CD4-positive, alpha-beta T cell (primary cell): ENCODE measurements at regions of chr2 and their contacts with region 1.

Region 1: GRCh38 chr2:177148477-177149154 is 64.0 kb upstream of the HNRNPA3 start:
- DNase-seq: peak; percentile 50 to 84 (median 62)
- ATAC-seq: peak; percentile 89
- H3K4me3 ChIP-seq: peak overlapping the region; percentile 56
- H3K4me3 Mint-ChIP-seq: peak overlapping the region; percentile 83
- H3K27ac ChIP-seq: no peak overlapping the region
- H3K27ac Mint-ChIP-seq: peak overlapping the region; percentile 8
- H3K4me1 ChIP-seq: peaks cover 8% of the 10 kb centered on the region
- H3K4me1 Mint-ChIP-seq: peaks cover 13% of the 10 kb centered on the region
- H3K27me3 ChIP-seq: peaks cover 4 to 25% of the 10 kb centered on the region in 2 experiments
- H3K27me3 Mint-ChIP-seq: peaks cover 49% of the 10 kb centered on the region
- CTCF ChIP-seq: peak; percentile 99

Region 2: DNA sequence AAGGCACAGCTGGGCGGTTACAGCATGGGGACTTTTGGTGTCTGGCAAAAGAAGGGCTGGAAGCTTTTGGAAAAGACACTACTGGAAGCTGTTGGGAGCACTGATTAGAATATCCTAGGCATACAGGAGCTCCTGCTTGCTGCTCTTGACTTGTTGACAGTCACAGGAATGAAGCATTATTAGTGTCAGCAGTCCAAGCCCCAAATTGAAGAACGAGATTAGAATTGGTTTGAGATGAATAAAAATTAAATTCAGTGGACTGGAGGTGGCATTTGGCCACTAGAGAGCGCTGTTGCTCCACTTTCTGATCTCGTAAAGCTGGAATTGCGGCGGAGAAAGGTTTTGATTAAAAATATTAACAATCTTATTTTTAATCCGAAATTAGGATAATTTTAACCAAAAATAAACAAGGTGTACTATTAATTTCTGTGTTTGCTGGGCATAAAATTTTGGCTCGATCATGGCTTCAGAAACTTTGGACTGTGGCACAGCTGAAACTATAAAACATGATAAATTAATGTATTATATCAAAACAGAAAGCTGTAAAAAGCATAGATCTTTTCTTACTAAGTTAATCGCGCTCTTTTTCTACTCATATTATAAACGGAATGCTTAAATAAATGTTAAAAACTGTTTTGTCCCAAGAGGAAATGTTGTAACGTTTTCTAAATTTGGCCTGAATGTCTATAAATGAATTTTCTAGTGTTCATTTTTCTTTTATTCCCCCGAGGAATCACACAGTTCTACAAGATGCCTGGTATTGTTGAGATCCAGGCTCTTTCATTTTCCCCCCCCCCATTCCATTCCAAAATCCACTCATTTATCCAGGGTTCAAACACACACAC is 1021.5 kb before region 1 on chr2:
- CTCF ChIA-PET with region 1: interaction called, 32 read pairs
- POLR2A ChIA-PET with region 1: interaction called, 3 read pairs
- intact Hi-C with region 1: loop called (anchors 1 to 2 kb)
- DNase-seq: peak; percentile 54 to 85 (median 65)
- ATAC-seq: no peak
- H3K4me3 ChIP-seq: no peak overlapping the region
- H3K4me3 Mint-ChIP-seq: no peak overlapping the region
- H3K27ac ChIP-seq: no peak overlapping the region
- H3K27ac Mint-ChIP-seq: peak overlapping the region; percentile 38
- H3K4me1 ChIP-seq: peaks cover 43% of the 10 kb centered on the region
- H3K4me1 Mint-ChIP-seq: peaks cover 45% of the 10 kb centered on the region
- H3K27me3 ChIP-seq: peaks cover 79 to 90% of the 10 kb centered on the region in 2 experiments
- H3K27me3 Mint-ChIP-seq: peaks cover 84% of the 10 kb centered on the region
- CTCF ChIP-seq: peak; percentile 99

Region 3: DNA sequence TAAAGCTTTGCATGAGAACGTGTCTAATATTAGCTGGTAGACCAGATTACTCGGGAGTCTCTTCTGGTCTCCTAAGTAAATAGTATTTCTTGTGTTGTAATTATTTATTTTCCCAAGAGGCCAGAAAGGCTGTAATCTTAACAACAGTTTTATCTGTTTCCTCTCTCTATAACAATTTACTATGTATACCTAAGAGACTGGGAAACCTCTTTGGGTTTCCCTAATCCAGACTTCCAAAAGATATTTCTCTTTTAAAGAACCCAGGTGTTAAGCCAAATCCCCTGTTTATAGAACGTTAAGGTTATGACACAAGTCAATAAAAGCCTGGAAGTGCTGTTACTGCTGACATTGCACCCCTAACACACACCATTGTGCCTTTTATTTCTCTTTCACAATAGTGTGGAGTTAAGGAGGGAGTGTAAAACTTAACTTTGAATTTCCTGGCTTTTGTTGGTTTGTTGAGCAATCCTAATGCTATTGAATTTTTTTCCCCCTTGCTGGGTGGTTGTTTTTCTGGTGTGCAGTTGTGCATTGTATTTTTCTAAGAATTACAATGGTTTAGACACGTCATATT is 686.7 kb before region 1 on chr2:
- CTCF ChIA-PET with region 1: no interaction called
- POLR2A ChIA-PET with region 1: no interaction called
- intact Hi-C with region 1: loop called (anchors 10 kb)
- DNase-seq: no peak
- ATAC-seq: no peak
- H3K4me3 ChIP-seq: no peak overlapping the region
- H3K4me3 Mint-ChIP-seq: no peak overlapping the region
- H3K27ac ChIP-seq: no peak overlapping the region
- H3K27ac Mint-ChIP-seq: no peak overlapping the region
- H3K4me1 ChIP-seq: no peaks in the 10 kb centered on the region
- H3K4me1 Mint-ChIP-seq: no peaks in the 10 kb centered on the region
- H3K27me3 ChIP-seq: peaks cover 10 to 53% of the 10 kb centered on the region in 2 experiments
- H3K27me3 Mint-ChIP-seq: peaks cover 73% of the 10 kb centered on the region
- CTCF ChIP-seq: no peak

Region 4: DNA sequence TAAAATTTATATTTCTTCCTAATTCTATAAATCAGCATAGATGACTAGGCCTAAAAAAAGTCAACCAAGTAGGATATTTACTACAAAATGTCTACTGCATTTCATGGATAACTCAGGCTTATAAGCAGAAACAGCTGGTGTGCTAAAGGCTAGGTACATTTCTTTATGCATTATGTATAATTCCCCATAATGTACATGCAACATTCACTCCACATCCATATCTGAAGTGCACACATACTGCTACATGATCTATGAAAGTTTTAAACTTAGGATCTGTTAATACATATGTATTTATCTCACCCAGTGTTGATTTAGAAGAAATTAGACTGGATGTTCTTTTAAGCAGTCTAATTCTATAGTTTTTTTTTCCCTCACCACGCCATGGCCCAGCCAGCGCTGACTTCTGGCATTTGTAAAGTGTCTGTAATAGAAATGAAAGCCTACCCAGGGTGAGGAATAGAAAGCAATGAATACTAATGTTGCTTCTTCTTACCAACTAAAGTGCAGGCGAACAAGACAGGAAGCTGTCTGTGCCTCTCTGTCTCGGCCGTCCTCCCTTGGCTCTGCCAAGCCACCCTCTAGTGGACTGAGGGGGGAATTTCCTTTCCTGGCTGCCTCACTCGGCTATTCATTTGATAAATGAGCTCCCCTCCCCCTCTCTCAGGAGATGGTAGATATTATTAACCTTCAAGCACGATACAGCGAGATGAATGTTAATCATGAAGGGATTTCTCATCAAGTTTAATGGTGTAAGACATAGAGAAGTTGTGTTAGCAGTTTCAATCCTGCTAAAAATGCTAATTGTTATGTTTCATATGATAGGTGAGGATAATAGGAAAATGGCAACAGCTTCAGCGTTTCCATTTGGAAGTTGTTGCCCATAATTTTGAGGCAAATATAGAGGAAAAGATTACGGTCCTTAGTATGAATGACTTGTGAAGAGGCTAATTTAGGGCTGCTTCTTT is 494.9 kb before region 1 on chr2:
- CTCF ChIA-PET with region 1: no interaction called
- POLR2A ChIA-PET with region 1: no interaction called
- intact Hi-C with region 1: loop called (anchors 10 kb)
- DNase-seq: peak in 6 of 14 experiments; percentile 7 to 52 (median 18)
- ATAC-seq: peak; percentile 51
- H3K4me3 ChIP-seq: no peak overlapping the region
- H3K4me3 Mint-ChIP-seq: no peak overlapping the region
- H3K27ac ChIP-seq: no peak overlapping the region
- H3K27ac Mint-ChIP-seq: no peak overlapping the region
- H3K4me1 ChIP-seq: peaks cover 3% of the 10 kb centered on the region
- H3K4me1 Mint-ChIP-seq: peaks cover 5% of the 10 kb centered on the region
- H3K27me3 ChIP-seq: peaks cover 10 to 23% of the 10 kb centered on the region in 2 experiments
- H3K27me3 Mint-ChIP-seq: peaks cover 79% of the 10 kb centered on the region
- CTCF ChIP-seq: peak; percentile 30

Region 5: DNA sequence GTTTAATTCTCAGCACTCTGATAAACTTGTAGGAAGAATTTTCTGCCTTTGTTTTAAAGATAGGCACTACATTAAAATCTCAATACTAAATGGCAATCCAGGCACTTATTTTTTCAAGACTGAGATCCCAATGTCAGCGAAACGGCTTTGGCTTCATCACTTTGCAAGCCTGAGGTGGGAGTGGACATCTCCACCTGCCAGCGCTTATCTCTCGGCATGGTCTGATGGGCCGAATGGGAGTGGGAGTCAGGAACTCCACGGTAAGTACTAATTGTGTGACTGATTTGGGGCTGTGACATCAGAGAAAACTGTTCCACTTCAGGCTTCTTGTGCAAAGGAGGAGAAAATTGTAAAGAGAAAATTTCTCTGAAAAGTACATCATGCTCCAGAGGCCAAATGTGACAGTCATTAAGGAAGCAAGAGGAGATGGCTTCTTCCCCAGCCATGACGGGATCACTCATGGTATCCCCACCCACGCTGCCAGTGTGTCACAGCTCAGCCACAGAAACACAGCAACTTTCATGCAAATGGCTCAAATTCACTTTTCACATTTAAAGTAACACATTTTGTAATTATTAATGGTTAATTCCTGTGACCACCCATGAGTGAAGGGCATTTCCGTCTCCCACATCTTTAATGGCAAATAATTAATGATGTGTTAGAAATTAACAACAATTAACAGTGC is 321.5 kb before region 1 on chr2:
- CTCF ChIA-PET with region 1: no interaction called
- POLR2A ChIA-PET with region 1: no interaction called
- intact Hi-C with region 1: loop called in 1 of 2 experiments (anchors 5 kb)
- DNase-seq: no peak
- ATAC-seq: no peak
- H3K4me3 ChIP-seq: no peak overlapping the region
- H3K4me3 Mint-ChIP-seq: peak overlapping the region; percentile 59
- H3K27ac ChIP-seq: no peak overlapping the region
- H3K27ac Mint-ChIP-seq: peak overlapping the region; percentile 90
- H3K4me1 ChIP-seq: peaks cover 6% of the 10 kb centered on the region
- H3K4me1 Mint-ChIP-seq: peaks cover 53% of the 10 kb centered on the region
- H3K27me3 ChIP-seq: no peaks in the 10 kb centered on the region
- H3K27me3 Mint-ChIP-seq: no peaks in the 10 kb centered on the region
- CTCF ChIP-seq: no peak

Region 6: DNA sequence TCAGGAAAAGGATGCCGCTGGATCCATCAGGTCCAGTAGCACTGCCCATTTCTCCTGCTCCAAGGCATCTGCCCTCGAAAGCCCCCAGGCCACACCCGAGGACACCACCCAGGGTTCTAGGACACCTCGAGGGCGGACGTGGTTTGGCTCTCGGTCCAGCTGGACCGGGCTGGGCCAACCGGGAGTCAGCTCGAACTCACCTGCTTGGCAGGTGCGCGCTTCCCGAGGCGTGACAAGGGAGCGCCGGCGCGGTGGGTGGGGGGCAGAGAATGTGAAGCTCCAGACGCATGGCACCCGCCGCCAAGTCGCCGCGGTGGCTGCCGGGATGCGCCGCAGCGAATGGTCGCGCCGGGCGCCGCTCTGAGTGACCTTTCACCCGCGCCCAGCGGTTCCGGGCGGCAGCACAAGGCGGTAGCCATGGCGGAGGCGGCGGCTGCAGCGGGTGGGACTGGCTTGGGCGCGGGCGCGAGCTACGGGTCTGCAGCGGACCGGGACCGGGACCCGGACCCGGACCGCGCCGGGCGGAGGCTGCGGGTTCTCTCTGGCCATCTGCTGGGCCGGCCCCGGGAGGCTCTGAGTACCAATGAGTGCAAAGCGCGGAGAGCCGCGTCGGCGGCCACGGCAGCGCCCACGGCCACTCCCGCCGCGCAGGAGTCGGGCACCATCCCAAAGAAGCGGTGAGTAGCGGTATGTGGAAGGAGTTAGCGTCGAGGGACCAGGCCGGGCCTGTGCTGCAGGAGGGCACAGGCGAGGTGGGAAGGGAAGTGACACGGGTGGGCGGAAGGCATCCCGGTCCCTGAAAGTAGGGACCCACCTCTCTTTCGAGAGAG is 244.0 kb after region 1 on chr2 and contains the start of gene AGPS:
- CTCF ChIA-PET with region 1: no interaction called
- POLR2A ChIA-PET with region 1: interaction called, 10 read pairs
- intact Hi-C with region 1: no loop called
- DNase-seq: peak; percentile 53 to 87 (median 69)
- ATAC-seq: peak; percentile 90
- H3K4me3 ChIP-seq: peak within 1 kb of the TSS; percentile 80
- H3K4me3 Mint-ChIP-seq: peak within 1 kb of the TSS; percentile 94
- H3K27ac ChIP-seq: no peak within 1 kb of the TSS
- H3K27ac Mint-ChIP-seq: peak within 1 kb of the TSS; percentile 80
- H3K4me1 ChIP-seq: peaks cover 27% of the 10 kb centered on the region
- H3K4me1 Mint-ChIP-seq: peaks cover 66% of the 10 kb centered on the region
- H3K27me3 ChIP-seq: no peaks in the 10 kb centered on the region
- H3K27me3 Mint-ChIP-seq: no peaks in the 10 kb centered on the region
- CTCF ChIP-seq: no peak
- total RNA-seq, gene AGPS: 21.5 to 23.9 TPM